ENCODE measurements at regions of chr4 and their contacts with region 1.

Region 1: GRCh38 chr4:48779998-48780742 is at the start of gene FRYL:
- DNase-seq: peak; percentile 100
- H3K4me3 ChIP-seq: peak within 1 kb of the TSS; percentile 77 to 81 (median 79)
- H3K27ac ChIP-seq: peak within 1 kb of the TSS; percentile 87
- H3K4me1 ChIP-seq: peaks cover 23% of the 10 kb centered on the region
- H3K27me3 ChIP-seq: no peaks in the 10 kb centered on the region
- CTCF ChIP-seq: no peak
- total RNA-seq, gene FRYL: 74.7 to 75.7 TPM

Region 2: DNA sequence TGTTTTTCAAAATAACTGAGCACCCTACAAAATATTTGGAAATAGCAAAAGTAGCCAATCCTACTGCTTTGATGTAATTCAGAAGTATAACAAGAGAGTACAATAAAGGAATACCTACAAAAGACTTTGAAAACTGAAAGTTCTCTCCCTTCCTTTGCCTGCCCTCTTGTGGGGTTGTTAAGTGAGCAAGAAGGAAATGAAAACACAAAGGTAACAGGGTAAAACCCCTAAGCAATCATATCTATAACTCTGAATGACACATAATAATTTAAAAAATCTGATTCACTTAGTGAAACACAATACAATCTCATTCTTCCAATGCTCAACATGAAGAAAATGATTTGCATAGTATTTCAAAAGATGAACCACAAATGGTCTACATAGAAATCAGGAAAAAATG is 98.3 kb before region 1 on chr4:
- CTCF ChIA-PET with region 1: no interaction called
- dilution Hi-C with region 1: no loop called
- in situ Hi-C with region 1: no loop called
- intact Hi-C with region 1: loop called (anchors 1 kb)
- DNase-seq: peak; percentile 50
- H3K4me3 ChIP-seq: no peak overlapping the region
- H3K27ac ChIP-seq: no peak overlapping the region
- H3K4me1 ChIP-seq: no peaks in the 10 kb centered on the region
- H3K27me3 ChIP-seq: no peaks in the 10 kb centered on the region
- CTCF ChIP-seq: peak; percentile 38 to 69

Region 3: GRCh38 chr4:48704091-48704801 is 75.9 kb before region 1 on chr4:
- CTCF ChIA-PET with region 1: no interaction called
- dilution Hi-C with region 1: loop called (anchors 5 kb)
- in situ Hi-C with region 1: loop called in 1 of 2 experiments (anchors 10 kb)
- intact Hi-C with region 1: loop called (anchors 1 kb)
- DNase-seq: no peak
- H3K4me3 ChIP-seq: no peak overlapping the region
- H3K27ac ChIP-seq: no peak overlapping the region
- H3K4me1 ChIP-seq: peaks cover 26% of the 10 kb centered on the region
- H3K27me3 ChIP-seq: no peaks in the 10 kb centered on the region
- CTCF ChIP-seq: no peak

Region 4: DNA sequence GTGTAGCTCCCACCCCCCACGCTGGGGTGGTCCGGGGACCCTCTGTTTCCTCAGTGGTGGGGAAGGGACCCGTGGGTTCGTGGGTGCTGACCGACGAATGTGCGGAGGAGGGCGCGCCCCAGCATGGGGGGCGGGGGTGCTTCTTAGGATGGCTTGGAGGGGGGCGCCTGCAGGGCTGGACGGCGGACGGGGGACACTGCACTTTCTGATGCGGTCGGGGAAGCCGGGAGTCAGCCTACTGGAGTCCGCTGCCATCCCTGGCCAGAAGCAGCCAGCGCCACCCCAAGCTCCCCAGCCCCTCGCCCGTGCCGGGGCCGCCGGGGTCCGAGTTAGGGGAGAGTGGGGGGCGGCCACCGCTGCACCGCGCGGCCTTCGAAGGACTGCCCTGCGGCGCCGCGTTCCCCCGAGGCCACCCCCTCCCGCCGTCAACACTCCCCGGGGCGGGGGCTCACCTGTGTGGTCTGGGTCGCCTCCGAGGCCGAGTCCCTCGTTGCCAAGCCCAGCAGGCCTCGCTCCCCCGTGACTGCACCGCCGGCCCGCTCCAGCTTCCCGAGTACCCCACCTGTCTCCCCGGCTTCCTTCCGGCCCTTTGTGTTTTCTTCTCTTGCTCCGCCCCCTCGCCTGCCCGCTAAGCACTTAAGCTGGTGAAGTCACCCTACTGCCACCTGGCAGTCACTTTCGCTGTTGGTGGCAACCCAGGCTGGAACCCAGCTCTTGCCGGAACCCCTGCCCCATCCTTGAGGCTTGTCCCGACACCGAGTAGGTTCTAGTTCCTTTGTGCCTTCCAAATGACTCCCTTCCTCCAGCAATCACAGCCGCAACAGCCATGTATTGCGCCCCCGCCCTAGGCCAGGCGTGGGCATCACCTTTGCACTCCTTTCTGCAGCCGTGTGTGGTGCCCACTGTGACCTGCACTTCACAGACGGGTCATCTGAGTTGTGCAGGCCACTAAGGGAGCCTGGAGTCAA is 126.3 kb after region 1 on chr4 and contains the start of gene OCIAD2:
- CTCF ChIA-PET with region 1: no interaction called
- dilution Hi-C with region 1: no loop called
- in situ Hi-C with region 1: no loop called
- intact Hi-C with region 1: loop called (anchors 1 kb)
- DNase-seq: peak; percentile 57
- H3K4me3 ChIP-seq: peak within 1 kb of the TSS; percentile 68 to 80 (median 74)
- H3K27ac ChIP-seq: peak within 1 kb of the TSS; percentile 54
- H3K4me1 ChIP-seq: peaks cover 39% of the 10 kb centered on the region
- H3K27me3 ChIP-seq: no peaks in the 10 kb centered on the region
- CTCF ChIP-seq: peak in 1 of 2 donors; percentile 21
- total RNA-seq, gene OCIAD2: 19.2 to 138 TPM

Measured in mammary epithelial cell (primary cell).